CD4-positive, alpha-beta memory T cell (primary cell): ENCODE measurements at regions of chr11 and their contacts with region 1.

Region 1: GRCh38 chr11:34916015-34916842 is at the starts of genes APIP and PDHX:
- DNase-seq: peak; percentile 83 to 95 (median 85)
- H3K4me3 ChIP-seq: peak within 1 kb of the TSS; percentile 93 to 95
- H3K4me3 Mint-ChIP-seq: peak within 1 kb of the TSS; percentile 90 to 100 (median 96)
- H3K27ac ChIP-seq: peak within 1 kb of the TSS; percentile 81
- H3K27ac Mint-ChIP-seq: peak within 1 kb of the TSS; percentile 95 to 99 (median 97)
- H3K4me1 ChIP-seq: peaks cover 29% of the 10 kb centered on the region
- H3K4me1 Mint-ChIP-seq: peaks cover 31 to 55% (median 40%) of the 10 kb centered on the region in 4 donors
- H3K27me3 ChIP-seq: no peaks in the 10 kb centered on the region
- H3K27me3 Mint-ChIP-seq: no peaks in the 10 kb centered on the region
- total RNA-seq, gene APIP: 17.7 to 18.4 TPM
- total RNA-seq, gene PDHX: 39.1 to 43.5 TPM

Region 2: DNA sequence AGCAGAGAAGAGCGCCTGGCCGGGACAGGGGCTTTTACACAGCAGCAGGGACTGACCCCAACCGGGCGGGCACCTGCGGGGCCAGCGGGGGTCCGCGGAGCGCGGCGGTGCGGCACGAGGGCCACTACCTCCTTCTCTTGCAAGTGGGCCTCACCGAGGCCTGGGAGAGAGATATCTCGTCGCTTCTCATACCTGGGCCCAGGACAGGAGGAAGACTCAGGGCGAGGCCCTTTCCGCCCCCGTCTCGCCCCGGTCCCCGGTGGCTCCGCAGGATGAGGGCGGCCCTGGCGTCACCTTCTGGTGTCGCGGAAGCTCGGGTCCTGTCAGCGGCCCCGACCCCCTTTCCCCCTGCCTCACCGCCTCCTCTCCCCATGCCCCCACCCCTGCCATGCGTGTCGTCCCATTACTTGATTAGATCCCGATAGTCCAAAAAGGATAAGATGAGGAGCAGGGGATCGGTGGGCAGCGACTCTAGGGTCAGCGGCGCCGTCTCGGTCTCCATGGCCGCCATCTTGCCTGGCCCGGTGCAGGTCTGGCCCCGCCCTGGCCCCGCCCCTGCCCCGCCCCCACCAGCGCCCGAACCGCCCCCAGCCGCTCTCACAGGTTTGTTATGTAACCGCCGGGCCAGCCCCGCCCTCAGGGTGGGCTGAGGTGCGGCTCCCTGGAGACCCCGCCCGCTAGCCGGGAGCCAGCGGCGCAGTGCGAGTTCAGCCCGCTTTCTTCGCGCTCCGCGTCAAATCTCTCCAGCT is 1142.1 kb before region 1 on chr11 and contains the start of gene FBXO3:
- CTCF ChIA-PET with region 1: no interaction called
- POLR2A ChIA-PET with region 1: no interaction called
- intact Hi-C with region 1: loop called (anchors 5 kb)
- DNase-seq: peak; percentile 88 to 89 (median 89)
- H3K4me3 ChIP-seq: peak within 1 kb of the TSS; percentile 85 to 90
- H3K4me3 Mint-ChIP-seq: peak within 1 kb of the TSS; percentile 93 to 99 (median 96)
- H3K27ac ChIP-seq: peak within 1 kb of the TSS; percentile 79
- H3K27ac Mint-ChIP-seq: peak within 1 kb of the TSS; percentile 94 to 99 (median 99)
- H3K4me1 ChIP-seq: peaks cover 42% of the 10 kb centered on the region
- H3K4me1 Mint-ChIP-seq: peaks cover 31 to 64% (median 49%) of the 10 kb centered on the region in 4 donors
- H3K27me3 ChIP-seq: no peaks in the 10 kb centered on the region
- H3K27me3 Mint-ChIP-seq: peaks cover 0 to 3% of the 10 kb centered on the region in 2 donors
- total RNA-seq, gene FBXO3: 55.1 to 55.6 TPM

Region 3: DNA sequence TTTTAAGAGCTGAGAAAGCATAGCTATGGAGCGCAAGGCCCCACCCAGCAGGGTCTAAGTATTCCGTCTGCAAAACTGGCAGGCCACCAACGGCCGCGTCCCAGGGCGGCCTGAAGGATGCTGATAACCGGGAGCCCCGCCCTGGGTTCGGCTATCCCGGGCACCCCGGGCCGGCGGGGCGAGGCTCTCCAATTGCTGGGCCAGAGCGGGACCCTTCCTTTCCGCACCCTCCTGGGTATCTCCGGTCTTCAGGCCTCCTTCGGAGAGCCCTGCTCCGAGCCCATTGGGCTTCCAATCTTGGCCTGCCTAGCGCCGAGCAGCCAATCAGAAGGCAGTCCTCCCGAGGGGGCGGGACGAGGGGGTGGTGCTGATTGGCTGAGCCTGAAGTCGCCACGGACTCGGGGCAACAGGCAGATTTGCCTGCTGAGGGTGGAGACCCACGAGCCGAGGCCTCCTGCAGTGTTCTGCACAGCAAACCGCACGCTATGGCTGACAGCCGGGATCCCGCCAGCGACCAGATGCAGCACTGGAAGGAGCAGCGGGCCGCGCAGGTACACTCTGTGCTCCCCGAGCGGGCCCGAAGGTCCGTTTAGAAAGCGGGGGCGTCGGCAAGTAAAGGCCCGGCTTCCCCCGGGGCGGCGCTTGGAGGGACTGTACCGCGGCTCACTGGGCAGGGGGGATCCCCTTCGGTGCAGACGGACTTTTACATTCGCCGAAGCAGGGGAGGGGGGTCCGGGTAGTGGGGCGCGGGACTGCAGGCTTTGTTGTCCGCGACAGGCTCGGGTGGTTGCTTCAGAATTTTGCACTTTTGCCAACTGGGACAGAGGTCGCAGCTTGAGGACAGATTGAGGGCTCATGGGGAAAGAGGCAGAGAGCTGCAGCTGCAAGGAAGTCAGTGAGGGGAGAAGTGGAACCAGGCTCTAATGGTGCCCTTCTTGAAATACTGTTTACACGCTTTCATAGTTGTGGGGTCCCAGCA is 477.4 kb before region 1 on chr11 and contains the start of gene CAT:
- CTCF ChIA-PET with region 1: no interaction called
- POLR2A ChIA-PET with region 1: no interaction called
- intact Hi-C with region 1: loop called (anchors 1 kb)
- DNase-seq: peak; percentile 96 to 97 (median 96)
- H3K4me3 ChIP-seq: peak within 1 kb of the TSS; percentile 52 to 90
- H3K4me3 Mint-ChIP-seq: peak within 1 kb of the TSS; percentile 94 to 99 (median 98)
- H3K27ac ChIP-seq: peak within 1 kb of the TSS; percentile 75
- H3K27ac Mint-ChIP-seq: peak within 1 kb of the TSS; percentile 93 to 98 (median 95)
- H3K4me1 ChIP-seq: peaks cover 28% of the 10 kb centered on the region
- H3K4me1 Mint-ChIP-seq: peaks cover 22 to 41% (median 31%) of the 10 kb centered on the region in 4 donors
- H3K27me3 ChIP-seq: no peaks in the 10 kb centered on the region
- H3K27me3 Mint-ChIP-seq: no peaks in the 10 kb centered on the region
- total RNA-seq, gene CAT: 35.1 to 38.4 TPM

Region 4: DNA sequence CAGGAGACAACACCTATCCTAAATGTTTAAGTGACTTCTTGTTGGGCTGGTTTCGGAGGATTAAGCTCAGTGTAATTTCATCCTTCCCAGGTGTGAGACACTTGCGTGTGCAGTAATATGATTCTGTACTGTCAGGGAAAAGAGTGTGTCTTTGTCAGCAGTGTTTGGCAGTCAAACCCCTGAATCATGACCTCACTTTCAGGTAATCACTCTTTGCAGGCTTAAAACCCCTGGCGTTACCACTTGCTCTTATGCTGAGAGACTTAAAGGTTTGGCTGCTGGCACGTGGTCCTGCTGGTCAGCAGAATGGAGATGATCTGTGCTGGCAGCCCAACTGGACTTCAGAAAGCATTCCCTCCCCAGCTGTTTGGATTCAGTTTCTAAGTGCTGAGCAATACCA is 56.2 kb before region 1 on chr11:
- CTCF ChIA-PET with region 1: no interaction called
- POLR2A ChIA-PET with region 1: no interaction called
- intact Hi-C with region 1: no loop called
- DNase-seq: no peak
- H3K4me3 ChIP-seq: no peak overlapping the region
- H3K4me3 Mint-ChIP-seq: no peak overlapping the region
- H3K27ac ChIP-seq: no peak overlapping the region
- H3K27ac Mint-ChIP-seq: no peak overlapping the region
- H3K4me1 ChIP-seq: no peaks in the 10 kb centered on the region
- H3K4me1 Mint-ChIP-seq: no peaks in the 10 kb centered on the region
- H3K27me3 ChIP-seq: no peaks in the 10 kb centered on the region
- H3K27me3 Mint-ChIP-seq: no peaks in the 10 kb centered on the region

Region 5: GRCh38 chr11:35144136-35144741 is 228.0 kb after region 1 on chr11:
- CTCF ChIA-PET with region 1: interaction called, 4 read pairs
- POLR2A ChIA-PET with region 1: no interaction called
- intact Hi-C with region 1: loop called (anchors 5 kb)
- DNase-seq: peak; percentile 67 to 90 (median 76)
- H3K4me3 ChIP-seq: peak overlapping the region; percentile 55 to 59
- H3K4me3 Mint-ChIP-seq: peak overlapping the region; percentile 83 to 99 (median 98)
- H3K27ac ChIP-seq: peak overlapping the region; percentile 73
- H3K27ac Mint-ChIP-seq: peak overlapping the region; percentile 93 to 100 (median 95)
- H3K4me1 ChIP-seq: peaks cover 72% of the 10 kb centered on the region
- H3K4me1 Mint-ChIP-seq: peaks cover 60 to 88% (median 70%) of the 10 kb centered on the region in 4 donors
- H3K27me3 ChIP-seq: no peaks in the 10 kb centered on the region
- H3K27me3 Mint-ChIP-seq: no peaks in the 10 kb centered on the region